Activated CD4-positive, alpha-beta memory T cell treated with anti-CD3 and anti-CD28 coated beads, Interleukin-2, amount 10 ng/mL, durations not matched to agents 7 days and 5 days (primary cell): ENCODE measurements at regions of chr3 and their contacts with region 1.

Region 1: GRCh38 chr3:14178247-14179113 is at the starts of genes LSM3 and XPC:
- DNase-seq: peak; percentile 98
- H3K4me3 Mint-ChIP-seq: peak within 1 kb of the TSS; percentile 84
- H3K27ac Mint-ChIP-seq: peak within 1 kb of the TSS; percentile 92
- H3K4me1 Mint-ChIP-seq: peaks cover 70% of the 10 kb centered on the region
- H3K27me3 Mint-ChIP-seq: no peaks in the 10 kb centered on the region
- total RNA-seq, gene LSM3: 14.2 to 14.3 TPM
- total RNA-seq, gene XPC: 34.2 to 34.8 TPM

Region 2: DNA sequence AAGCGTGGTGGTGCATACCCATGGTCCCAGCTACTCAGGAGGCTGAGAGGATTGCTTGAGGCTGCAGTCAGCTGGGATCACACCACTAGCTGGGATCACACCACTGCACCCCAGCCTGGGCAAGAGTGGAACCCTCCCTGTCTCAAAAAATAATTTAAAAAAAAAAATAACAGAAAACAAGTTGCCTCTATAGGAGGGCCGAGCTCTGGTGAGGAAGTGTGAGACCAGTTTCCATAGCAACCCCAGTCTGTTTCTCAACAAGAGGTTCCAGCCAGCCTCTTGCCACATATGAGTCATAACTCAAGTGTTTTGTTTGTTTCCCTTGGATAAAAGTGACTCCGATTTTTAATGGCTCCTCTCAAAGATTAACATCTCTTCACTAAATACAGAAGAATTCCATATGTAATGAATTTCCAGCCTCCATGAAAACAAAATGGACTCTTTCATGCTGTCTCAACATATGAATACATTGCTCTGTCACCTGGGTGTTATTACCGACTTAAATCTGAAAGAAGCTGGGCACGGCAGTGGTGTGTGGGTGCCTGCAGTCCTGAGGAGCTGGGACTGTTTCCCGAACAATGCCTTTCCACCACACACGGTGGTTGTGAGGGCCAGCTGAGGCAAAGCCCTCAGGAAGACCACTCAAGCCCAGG is 33.9 kb before region 1 on chr3:
- CTCF ChIA-PET with region 1: interaction called, 13 read pairs
- POLR2A ChIA-PET with region 1: interaction called, 73 read pairs
- DNase-seq: peak; percentile 74
- H3K4me3 Mint-ChIP-seq: peak overlapping the region; percentile 57
- H3K27ac Mint-ChIP-seq: peak overlapping the region; percentile 92
- H3K4me1 Mint-ChIP-seq: peaks cover 41% of the 10 kb centered on the region
- H3K27me3 Mint-ChIP-seq: no peaks in the 10 kb centered on the region

Region 3: GRCh38 chr3:14162185-14162584 is 16.3 kb before region 1 on chr3:
- CTCF ChIA-PET with region 1: interaction called, 3 read pairs
- POLR2A ChIA-PET with region 1: interaction called, 18 read pairs
- DNase-seq: no peak
- H3K4me3 Mint-ChIP-seq: no peak overlapping the region
- H3K27ac Mint-ChIP-seq: no peak overlapping the region
- H3K4me1 Mint-ChIP-seq: no peaks in the 10 kb centered on the region
- H3K27me3 Mint-ChIP-seq: no peaks in the 10 kb centered on the region

Region 4: GRCh38 chr3:14402304-14402811 is 223.9 kb after region 1 on chr3 and contains the start of gene SLC6A6:
- CTCF ChIA-PET with region 1: interaction called, 4 read pairs
- POLR2A ChIA-PET with region 1: interaction called, 11 read pairs
- DNase-seq: peak; percentile 95
- H3K4me3 Mint-ChIP-seq: peak within 1 kb of the TSS; percentile 97
- H3K27ac Mint-ChIP-seq: peak within 1 kb of the TSS; percentile 96
- H3K4me1 Mint-ChIP-seq: peaks cover 47% of the 10 kb centered on the region
- H3K27me3 Mint-ChIP-seq: peaks cover 2% of the 10 kb centered on the region
- total RNA-seq, gene SLC6A6: 59.0 to 61.5 TPM

Region 5: GRCh38 chr3:14651440-14652251 is 473.2 kb after region 1 on chr3 and contains the start of gene CCDC174:
- CTCF ChIA-PET with region 1: interaction called, 3 read pairs
- POLR2A ChIA-PET with region 1: interaction called, 20 read pairs
- DNase-seq: peak; percentile 97
- H3K4me3 Mint-ChIP-seq: peak within 1 kb of the TSS; percentile 96
- H3K27ac Mint-ChIP-seq: peak within 1 kb of the TSS; percentile 97
- H3K4me1 Mint-ChIP-seq: peaks cover 50% of the 10 kb centered on the region
- H3K27me3 Mint-ChIP-seq: no peaks in the 10 kb centered on the region
- total RNA-seq, gene CCDC174: 25.1 to 27.4 TPM